Activated CD4-positive, alpha-beta memory T cell treated with anti-CD3 and anti-CD28 coated beads for 36 hours (primary cell): ENCODE measurements at regions of chr3 and their contacts with region 1.

Region 1: DNA sequence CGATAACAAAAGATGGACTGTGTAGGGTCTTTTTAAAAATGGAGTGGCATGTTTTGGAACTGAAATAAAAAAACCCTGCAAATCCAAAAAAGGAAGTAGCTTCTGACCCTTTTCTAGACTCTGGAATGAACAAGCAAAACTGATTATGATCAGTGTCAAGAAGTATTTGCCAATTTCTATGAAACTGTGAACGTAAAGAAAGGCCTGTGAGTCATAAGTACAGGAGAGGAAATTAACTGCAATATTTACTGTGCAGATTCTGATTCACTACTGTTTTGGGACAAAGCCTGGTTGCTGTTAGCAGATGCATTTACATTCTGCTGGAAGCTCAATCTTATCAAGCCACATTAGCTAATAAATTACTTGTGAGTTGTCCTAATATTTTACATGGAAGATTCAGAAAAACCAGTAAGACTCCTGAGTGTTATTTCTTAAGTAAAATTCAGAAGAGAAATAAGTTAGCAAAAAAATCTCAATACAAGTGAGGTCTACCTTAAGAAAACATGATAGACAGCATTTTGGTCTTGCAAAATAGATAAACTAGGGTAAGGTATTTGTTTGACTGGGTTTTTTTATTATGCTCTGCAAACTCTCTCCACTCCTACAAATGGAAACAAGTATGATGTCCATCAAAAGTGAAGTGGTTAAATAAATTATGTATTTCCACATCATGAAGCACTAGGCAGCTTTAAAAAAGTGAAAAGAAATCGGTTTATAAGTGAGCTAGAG is 90.2 kb upstream of the LMOD3 start:
- DNase-seq: no peak
- H3K4me3 Mint-ChIP-seq: no peak overlapping the region
- H3K27ac Mint-ChIP-seq: peak overlapping the region; percentile 76
- H3K4me1 Mint-ChIP-seq: peaks cover 52% of the 10 kb centered on the region
- H3K27me3 Mint-ChIP-seq: no peaks in the 10 kb centered on the region

Region 2: DNA sequence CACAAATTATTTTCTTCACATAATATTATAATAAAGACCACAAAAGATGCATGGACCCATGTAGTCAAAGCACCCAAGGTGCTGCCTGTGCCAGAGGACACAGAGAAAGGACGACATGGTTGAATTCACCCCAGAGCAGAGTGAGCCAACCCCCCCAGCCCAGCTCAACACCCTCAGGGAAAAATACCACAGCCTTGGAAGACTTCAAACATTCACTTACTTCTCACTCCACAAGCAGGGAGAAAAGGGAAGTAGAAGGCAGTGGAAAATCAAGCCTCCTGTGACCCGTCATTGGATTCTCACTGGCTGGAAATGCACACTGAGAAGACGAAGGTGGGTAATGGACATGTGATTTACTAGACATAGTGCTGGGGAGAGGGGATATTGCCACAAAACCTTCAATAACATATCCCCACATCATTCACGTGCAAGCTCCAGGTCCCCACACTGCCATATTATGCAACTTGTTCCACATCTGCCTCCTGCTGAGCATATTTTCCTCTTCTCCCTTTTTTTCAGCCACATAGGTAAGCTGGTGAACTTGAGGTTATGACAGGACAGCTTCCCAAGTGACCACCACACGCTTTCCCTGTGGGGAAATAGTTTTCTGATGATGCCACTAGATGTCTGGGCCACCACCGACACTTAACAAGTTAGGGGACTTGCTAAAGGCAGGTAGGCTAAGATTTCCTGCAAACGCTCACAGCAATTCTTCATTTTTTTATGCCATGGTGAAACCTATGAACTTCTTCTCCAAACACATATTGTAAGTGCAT is 350.9 kb before region 1 on chr3:
- CTCF ChIA-PET with region 1: no interaction called
- POLR2A ChIA-PET with region 1: no interaction called
- intact Hi-C with region 1: no loop called
- DNase-seq: no peak
- H3K4me3 Mint-ChIP-seq: no peak overlapping the region
- H3K27ac Mint-ChIP-seq: no peak overlapping the region
- H3K4me1 Mint-ChIP-seq: no peaks in the 10 kb centered on the region
- H3K27me3 Mint-ChIP-seq: peaks cover 31% of the 10 kb centered on the region

Region 3: DNA sequence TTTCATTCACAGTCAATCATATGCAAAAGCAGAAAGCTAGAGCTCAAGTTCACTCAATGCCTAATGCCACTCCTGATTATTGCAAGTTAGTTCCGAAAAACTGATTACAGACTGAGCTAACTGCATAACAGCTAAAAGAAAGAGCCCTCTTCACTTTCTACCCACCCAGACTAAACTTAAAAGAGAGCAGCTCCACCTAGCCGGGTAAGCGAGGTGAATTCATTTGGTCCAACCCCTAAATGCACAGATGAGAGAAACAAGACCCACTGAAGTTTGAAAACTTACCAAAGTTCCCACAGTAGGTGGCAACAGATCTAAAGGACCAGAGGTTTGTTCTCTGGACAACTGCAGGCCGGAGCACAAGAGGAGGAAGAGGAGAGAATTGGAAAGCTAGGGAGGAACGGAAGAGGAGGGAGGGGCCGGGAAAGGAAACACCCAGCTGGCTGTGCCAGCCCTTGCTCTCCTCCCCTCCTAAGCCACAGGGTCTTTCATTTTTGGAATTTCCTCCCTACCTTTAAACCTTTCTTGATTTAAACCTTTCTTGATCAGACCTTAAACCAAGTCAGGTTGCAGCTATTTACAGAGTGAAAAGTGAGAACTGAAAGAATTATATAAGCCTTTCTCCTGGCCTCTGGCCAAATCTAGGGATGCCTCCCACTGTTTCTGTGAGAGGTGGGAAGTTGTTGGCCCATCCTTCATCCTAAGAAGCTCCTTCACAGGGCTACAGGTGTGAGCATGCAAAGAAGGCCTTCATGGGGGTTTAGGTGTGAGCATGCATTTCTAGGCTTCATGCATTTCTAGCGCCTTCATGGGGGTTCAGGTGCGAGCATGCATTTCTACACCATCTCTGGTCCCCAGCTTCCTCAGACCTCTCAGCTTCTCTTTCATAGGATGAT is 24.5 kb after region 1 on chr3:
- CTCF ChIA-PET with region 1: interaction called, 4 read pairs
- POLR2A ChIA-PET with region 1: no interaction called
- intact Hi-C with region 1: loop called (anchors 2 kb)
- DNase-seq: no peak
- H3K4me3 Mint-ChIP-seq: peak overlapping the region; percentile 64
- H3K27ac Mint-ChIP-seq: peak overlapping the region; percentile 20
- H3K4me1 Mint-ChIP-seq: peaks cover 17% of the 10 kb centered on the region
- H3K27me3 Mint-ChIP-seq: no peaks in the 10 kb centered on the region

Region 4: GRCh38 chr3:70568626-70569025 is 1356.1 kb after region 1 on chr3:
- CTCF ChIA-PET with region 1: no interaction called
- POLR2A ChIA-PET with region 1: no interaction called
- intact Hi-C with region 1: no loop called
- DNase-seq: no peak
- H3K4me3 Mint-ChIP-seq: no peak overlapping the region
- H3K27ac Mint-ChIP-seq: no peak overlapping the region
- H3K4me1 Mint-ChIP-seq: no peaks in the 10 kb centered on the region
- H3K27me3 Mint-ChIP-seq: peaks cover 2% of the 10 kb centered on the region